ENCODE measurements at regions of chr3 and their contacts with region 1.

Region 1: GRCh38 chr3:144482876-144483275 is 511.3 kb downstream of the DIPK2A start:
- DNase-seq: no peak
- H3K4me3 ChIP-seq: no peak overlapping the region
- H3K4me3 Mint-ChIP-seq: no peak overlapping the region
- H3K27ac Mint-ChIP-seq: no peak overlapping the region
- H3K4me1 ChIP-seq: no peaks in the 10 kb centered on the region
- H3K4me1 Mint-ChIP-seq: no peaks in the 10 kb centered on the region
- H3K27me3 ChIP-seq: no peaks in the 10 kb centered on the region
- H3K27me3 Mint-ChIP-seq: no peaks in the 10 kb centered on the region
- CTCF ChIP-seq: no peak

Region 2: DNA sequence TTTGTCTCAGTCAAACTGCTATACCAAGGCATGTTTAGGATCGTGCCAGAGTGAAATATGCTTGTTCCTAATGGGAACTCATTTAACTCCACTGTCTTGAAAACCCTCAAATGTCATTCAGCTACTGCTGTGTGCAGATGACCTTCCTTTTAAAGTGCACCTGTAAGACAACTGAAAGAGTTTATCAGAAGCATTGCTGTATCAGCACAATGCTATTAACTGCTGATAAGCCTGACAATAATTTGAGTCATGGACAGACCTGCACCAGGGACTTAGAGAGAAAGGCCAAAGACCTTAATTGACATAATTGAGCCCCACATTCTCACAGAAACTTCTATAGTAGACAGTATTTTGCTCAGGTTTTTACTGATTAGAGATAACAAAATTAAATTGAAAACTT is 46.7 kb after region 1 on chr3:
- CTCF ChIA-PET with region 1: no interaction called
- POLR2A ChIA-PET with region 1: no interaction called
- intact Hi-C with region 1: loop called (anchors 2 kb)
- DNase-seq: no peak
- H3K4me3 ChIP-seq: no peak overlapping the region
- H3K4me3 Mint-ChIP-seq: no peak overlapping the region
- H3K27ac Mint-ChIP-seq: no peak overlapping the region
- H3K4me1 ChIP-seq: 0 out of 2 replicates have a peak, but pooled peaks cover 8% of the 10 kb centered on the region
- H3K4me1 Mint-ChIP-seq: peaks cover 14% of the 10 kb centered on the region
- H3K27me3 ChIP-seq: no peaks in the 10 kb centered on the region
- H3K27me3 Mint-ChIP-seq: no peaks in the 10 kb centered on the region
- CTCF ChIP-seq: no peak

Region 3: DNA sequence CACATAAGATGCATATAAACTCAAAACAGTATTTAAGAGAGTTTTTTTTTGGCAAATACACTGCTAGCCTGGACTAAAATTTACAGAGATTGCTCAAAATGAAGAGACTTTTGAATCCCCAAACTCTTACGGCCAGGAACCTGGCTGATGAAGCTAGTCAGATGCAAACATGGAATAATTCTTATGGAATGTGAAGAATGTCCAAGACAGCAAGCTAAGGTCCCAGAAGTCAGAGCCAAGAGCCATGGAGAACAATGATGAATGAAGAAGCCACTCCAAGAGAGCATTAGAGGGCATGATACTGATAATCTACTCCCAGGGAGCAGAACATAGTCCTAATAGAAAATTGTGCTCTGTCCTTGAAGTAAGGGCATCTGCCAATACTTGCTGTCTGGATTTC is 194.2 kb after region 1 on chr3:
- CTCF ChIA-PET with region 1: no interaction called
- POLR2A ChIA-PET with region 1: no interaction called
- intact Hi-C with region 1: no loop called
- DNase-seq: no peak
- H3K4me3 ChIP-seq: no peak overlapping the region
- H3K4me3 Mint-ChIP-seq: no peak overlapping the region
- H3K27ac Mint-ChIP-seq: no peak overlapping the region
- H3K4me1 ChIP-seq: 0 out of 2 replicates have a peak, but pooled peaks cover 4% of the 10 kb centered on the region
- H3K4me1 Mint-ChIP-seq: peaks cover 8% of the 10 kb centered on the region
- H3K27me3 ChIP-seq: no peaks in the 10 kb centered on the region
- H3K27me3 Mint-ChIP-seq: no peaks in the 10 kb centered on the region
- CTCF ChIP-seq: no peak

Region 4: DNA sequence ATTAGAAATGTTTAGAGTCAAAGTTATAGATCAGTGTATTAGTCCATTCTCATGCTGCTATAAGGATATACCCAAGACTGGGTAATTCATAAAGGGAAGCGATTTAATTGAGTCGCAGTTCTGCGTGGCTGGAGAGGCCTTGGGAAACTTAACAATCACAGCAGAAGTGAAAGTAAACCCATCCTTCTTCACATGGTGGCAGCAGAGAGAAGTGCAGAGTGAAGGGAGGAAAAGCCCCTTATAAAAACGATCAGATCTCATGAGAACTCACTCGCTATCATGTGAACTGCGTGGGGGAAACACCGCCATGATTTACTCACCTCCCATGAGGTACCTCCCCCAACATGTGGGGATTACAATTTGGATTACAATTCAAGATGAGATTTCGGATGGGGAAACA is 360.2 kb after region 1 on chr3:
- CTCF ChIA-PET with region 1: no interaction called
- POLR2A ChIA-PET with region 1: no interaction called
- intact Hi-C with region 1: no loop called
- DNase-seq: peak in 1 of 2 experiments; percentile 8
- H3K4me3 ChIP-seq: no peak overlapping the region
- H3K4me3 Mint-ChIP-seq: no peak overlapping the region
- H3K27ac Mint-ChIP-seq: no peak overlapping the region
- H3K4me1 ChIP-seq: no peaks in the 10 kb centered on the region
- H3K4me1 Mint-ChIP-seq: no peaks in the 10 kb centered on the region
- H3K27me3 ChIP-seq: no peaks in the 10 kb centered on the region
- H3K27me3 Mint-ChIP-seq: no peaks in the 10 kb centered on the region
- CTCF ChIP-seq: no peak